ENCODE measurements at regions of chr3 and their contacts with region 1.

Region 1: DNA sequence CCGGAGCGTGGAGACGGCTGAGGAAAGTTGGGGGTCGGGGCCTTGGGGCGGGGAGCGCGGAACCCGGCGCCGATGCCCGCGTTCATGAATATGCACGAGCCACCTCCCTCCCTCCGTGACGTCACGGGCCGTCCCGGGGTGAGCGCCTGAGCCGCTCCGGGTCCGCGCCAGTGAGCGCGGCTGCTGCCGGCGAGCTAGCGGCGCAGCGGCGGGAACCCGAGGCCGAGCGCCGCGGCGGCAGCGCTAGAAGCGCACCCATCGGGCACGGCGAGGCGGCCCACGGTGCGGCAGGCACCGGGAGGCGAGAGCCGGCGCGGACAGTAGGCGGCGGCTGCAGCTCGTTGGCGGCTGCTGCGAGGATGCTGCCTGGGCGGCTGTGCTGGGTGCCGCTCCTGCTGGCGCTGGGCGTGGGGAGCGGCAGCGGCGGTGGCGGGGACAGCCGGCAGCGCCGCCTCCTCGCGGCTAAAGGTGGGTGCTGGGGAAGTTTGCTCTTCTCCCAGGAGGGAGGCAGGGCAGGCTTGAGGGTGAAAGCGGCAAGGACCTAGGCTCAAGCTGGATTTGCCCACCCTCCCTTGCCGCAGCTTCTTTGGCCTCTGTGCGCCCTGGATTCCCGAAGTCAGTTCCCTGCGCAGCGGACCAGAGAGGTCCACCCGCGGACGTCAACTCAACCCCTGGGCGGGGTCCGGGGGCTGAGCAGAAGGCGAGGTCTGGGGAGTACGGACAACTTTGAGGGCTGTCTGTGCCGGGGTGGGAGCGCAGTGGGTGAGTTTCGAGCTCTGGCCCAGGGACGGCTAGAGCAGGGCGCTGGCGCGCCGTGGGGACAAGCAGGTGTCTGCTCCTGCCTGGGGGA is at the start of gene CLSTN2:
- DNase-seq: peak; percentile 17
- H3K4me3 ChIP-seq: peak within 1 kb of the TSS; percentile 18 to 27
- H3K27ac ChIP-seq: no peak within 1 kb of the TSS
- H3K4me1 ChIP-seq: no peaks in the 10 kb centered on the region
- H3K27me3 ChIP-seq: no peaks in the 10 kb centered on the region
- CTCF ChIP-seq: peak in 1 of 4 experiments; percentile 26
- POLR2A ChIP-seq: no peak
- total RNA-seq, gene CLSTN2: 3.5 to 60.3 TPM

Region 2: DNA sequence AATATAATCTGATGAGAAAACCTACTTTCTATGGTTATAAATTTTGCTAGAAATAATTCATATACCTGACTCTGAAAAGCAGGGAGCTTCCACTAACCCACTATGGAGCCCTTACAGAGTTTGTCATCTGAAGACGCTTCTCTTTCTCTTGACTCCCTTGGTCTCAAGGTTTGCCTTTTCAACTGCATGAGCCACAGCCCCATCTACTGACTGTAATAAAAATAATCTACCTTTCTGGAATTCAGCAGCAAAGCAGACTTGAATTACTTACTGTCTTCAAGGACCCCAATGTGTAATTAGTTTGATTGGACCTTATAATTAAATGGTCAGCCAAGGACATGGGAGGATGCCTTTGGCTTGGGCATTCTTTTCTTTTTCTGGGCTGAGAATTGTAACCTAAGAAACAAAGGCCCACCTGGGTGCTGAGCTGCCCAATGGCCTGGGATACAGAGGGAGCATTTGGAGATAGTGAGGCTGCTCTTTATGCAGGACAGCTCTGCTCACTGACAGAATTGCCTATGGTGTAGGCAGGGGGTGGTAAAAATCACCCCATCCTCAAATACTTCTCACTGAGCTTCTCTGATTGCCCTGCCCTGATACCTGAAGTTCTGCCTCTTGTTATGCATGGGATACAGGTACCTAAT is 564.0 kb after region 1 on chr3:
- intact Hi-C with region 1: loop called (anchors 10 kb)
- DNase-seq: no peak
- H3K4me3 ChIP-seq: no peak overlapping the region
- H3K27ac ChIP-seq: no peak overlapping the region
- H3K4me1 ChIP-seq: no peaks in the 10 kb centered on the region
- H3K27me3 ChIP-seq: no peaks in the 10 kb centered on the region
- CTCF ChIP-seq: peak in 2 of 4 experiments; percentile 23 to 44
- POLR2A ChIP-seq: no peak

Region 3: DNA sequence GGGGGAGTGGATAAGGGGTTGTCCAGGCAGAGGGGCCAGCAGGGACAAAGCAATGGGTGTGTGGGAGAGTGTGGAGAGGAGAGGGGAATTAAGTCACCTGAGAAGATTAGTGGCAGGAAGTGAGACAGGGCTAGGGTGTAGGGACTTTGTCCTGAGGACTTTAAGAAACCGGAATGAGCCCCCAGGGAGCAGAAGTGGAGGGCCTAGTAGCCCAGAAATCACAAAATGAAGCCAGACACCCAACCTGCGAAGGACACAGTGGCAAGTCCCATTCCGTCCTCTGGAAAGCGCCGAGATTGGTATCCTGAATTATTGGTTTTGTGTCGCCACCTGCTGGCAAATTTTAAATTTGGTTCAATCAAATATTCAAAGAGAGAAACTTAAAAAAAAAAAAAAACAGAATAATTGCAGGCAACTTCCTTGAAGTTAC is 928.4 kb after region 1 on chr3:
- intact Hi-C with region 1: loop called (anchors 5 kb)
- DNase-seq: peak; percentile 47
- H3K4me3 ChIP-seq: no peak overlapping the region
- H3K27ac ChIP-seq: no peak overlapping the region
- H3K4me1 ChIP-seq: no peaks in the 10 kb centered on the region
- H3K27me3 ChIP-seq: no peaks in the 10 kb centered on the region
- CTCF ChIP-seq: peak in 3 of 4 experiments; percentile 44 to 50 (median 50)
- POLR2A ChIP-seq: no peak